Activated T-helper 1 cell treated with anti-CD3 and anti-CD28 coated beads, Interleukin-12 subunit alpha, Interleukin-12 subunit beta, Interleukin-2, Interleukin-4 antibody, amounts not matched to agents 30 ng/mL and 10 ng/mL and 1 ng/mL, durations not matched to agents 14 hours and 24 hours and 36 hours (primary cell): ENCODE measurements at regions of chr13 and their contacts with region 1.

Region 1: GRCh38 chr13:51425410-51426042 is 27.3 kb downstream of the INTS6 start:
- DNase-seq: no peak
- H3K4me3 Mint-ChIP-seq: no peak overlapping the region
- H3K27ac Mint-ChIP-seq: no peak overlapping the region
- H3K4me1 Mint-ChIP-seq: peaks cover 64% of the 10 kb centered on the region
- H3K27me3 Mint-ChIP-seq: no peaks in the 10 kb centered on the region

Region 2: GRCh38 chr13:51125498-51126226 is 299.9 kb before region 1 on chr13:
- intact Hi-C with region 1: loop called (anchors 10 kb)
- DNase-seq: peak; percentile 25
- H3K4me3 Mint-ChIP-seq: no peak overlapping the region
- H3K27ac Mint-ChIP-seq: no peak overlapping the region
- H3K4me1 Mint-ChIP-seq: peaks cover 12% of the 10 kb centered on the region
- H3K27me3 Mint-ChIP-seq: peaks cover 9% of the 10 kb centered on the region

Region 3: DNA sequence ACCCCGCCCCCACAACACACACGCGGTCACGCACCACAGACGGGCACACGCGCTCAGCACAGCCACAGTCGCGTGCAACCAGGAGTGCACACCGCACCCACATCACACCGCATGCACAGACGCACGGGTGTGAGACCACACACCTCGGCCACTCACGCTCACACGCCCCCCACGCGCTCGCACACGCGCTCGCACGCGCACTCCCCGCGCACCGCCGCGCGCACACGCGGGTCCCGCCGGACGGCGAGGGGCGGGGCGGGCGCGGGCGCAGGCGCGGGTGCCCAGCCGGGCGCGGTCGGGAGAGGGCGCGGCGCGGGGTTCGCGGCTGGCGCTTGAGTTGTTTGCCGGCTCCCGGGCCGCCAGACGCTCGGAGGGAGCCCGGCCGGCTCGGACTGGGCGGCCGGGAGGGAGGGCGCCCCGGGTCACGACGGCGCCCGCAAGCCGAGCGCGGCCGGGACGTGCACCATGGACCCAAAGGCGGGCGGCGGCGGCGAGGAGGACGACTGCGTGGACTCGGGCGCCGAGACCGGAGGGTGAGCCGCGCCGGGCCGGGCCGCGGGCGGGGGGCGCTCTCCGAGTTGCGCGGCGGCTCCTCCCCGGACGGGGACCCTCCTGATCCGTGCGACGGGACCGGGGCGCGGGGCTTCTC is 203.4 kb before region 1 on chr13 and contains the start of gene FAM124A:
- intact Hi-C with region 1: loop called (anchors 10 kb)
- DNase-seq: peak; percentile 41
- H3K4me3 Mint-ChIP-seq: peak within 1 kb of the TSS; percentile 79
- H3K27ac Mint-ChIP-seq: peak within 1 kb of the TSS; percentile 52
- H3K4me1 Mint-ChIP-seq: no peaks in the 10 kb centered on the region
- H3K27me3 Mint-ChIP-seq: peaks cover 59% of the 10 kb centered on the region
- total RNA-seq, gene FAM124A: 0.67 and 0.91 TPM in 2 replicates

Region 4: DNA sequence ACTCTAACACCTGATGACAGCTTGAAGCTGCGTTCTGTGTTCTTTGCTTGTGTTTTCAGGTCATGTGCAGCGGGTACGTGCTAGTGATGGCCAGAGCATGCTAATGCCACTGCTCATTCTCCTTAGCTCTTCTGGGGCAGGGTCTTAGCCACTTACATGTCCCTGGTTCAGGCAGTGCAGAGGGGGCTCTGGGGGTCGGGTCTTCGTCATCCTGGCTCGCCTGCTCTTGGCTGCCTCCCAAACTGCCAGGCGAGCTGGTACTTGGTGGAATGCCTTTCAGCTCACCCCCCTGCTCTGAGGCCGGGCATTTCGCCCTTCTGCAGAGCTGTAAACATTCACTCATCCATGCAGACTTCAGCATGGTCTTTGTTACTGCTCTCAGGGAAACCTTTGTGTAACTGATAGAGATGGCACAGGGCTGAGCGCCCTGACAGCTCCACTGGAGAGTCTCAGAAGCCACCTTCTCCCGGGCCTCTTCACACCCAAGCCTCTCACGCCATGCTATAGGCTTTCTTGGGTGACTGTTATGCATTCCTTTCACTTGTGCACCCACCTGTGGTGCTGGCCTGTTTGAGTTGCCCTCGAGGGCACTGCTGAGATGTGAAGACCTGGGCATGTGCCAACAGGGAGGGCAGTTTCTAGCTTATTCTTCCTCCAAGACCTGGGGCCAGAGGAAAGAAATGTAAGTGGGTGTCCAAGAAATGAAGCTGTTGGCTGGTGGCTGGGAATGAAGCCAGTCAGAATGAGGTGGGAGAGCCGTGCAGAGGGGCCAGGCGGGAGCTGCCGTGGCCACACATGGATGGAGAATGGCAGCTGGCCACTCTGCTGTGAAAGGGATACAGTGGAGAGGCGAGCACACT is 178.9 kb before region 1 on chr13:
- intact Hi-C with region 1: no loop called
- DNase-seq: no peak
- H3K4me3 Mint-ChIP-seq: no peak overlapping the region
- H3K27ac Mint-ChIP-seq: no peak overlapping the region
- H3K4me1 Mint-ChIP-seq: no peaks in the 10 kb centered on the region
- H3K27me3 Mint-ChIP-seq: peaks cover 3% of the 10 kb centered on the region

Region 5: GRCh38 chr13:51330791-51331190 is 94.7 kb before region 1 on chr13:
- intact Hi-C with region 1: loop called (anchors 1 kb)
- DNase-seq: no peak
- H3K4me3 Mint-ChIP-seq: no peak overlapping the region
- H3K27ac Mint-ChIP-seq: peak overlapping the region; percentile 69
- H3K4me1 Mint-ChIP-seq: peaks cover 22% of the 10 kb centered on the region
- H3K27me3 Mint-ChIP-seq: no peaks in the 10 kb centered on the region

Region 6: GRCh38 chr13:51380269-51380668 is 45.3 kb before region 1 on chr13:
- intact Hi-C with region 1: no loop called
- DNase-seq: no peak
- H3K4me3 Mint-ChIP-seq: no peak overlapping the region
- H3K27ac Mint-ChIP-seq: no peak overlapping the region
- H3K4me1 Mint-ChIP-seq: no peaks in the 10 kb centered on the region
- H3K27me3 Mint-ChIP-seq: no peaks in the 10 kb centered on the region